HEK293 (cell line): ENCODE measurements at regions of chr19 and their contacts with region 1.

Region 1: GRCh38 chr19:19145684-19146608 is 7.7 kb upstream of the TMEM161A start:
- H3K4me3 ChIP-seq: no peak overlapping the region
- H3K27ac ChIP-seq: no peak overlapping the region
- H3K4me1 ChIP-seq: no peaks in the 10 kb centered on the region
- CTCF ChIP-seq: peak; percentile 81

Region 2: DNA sequence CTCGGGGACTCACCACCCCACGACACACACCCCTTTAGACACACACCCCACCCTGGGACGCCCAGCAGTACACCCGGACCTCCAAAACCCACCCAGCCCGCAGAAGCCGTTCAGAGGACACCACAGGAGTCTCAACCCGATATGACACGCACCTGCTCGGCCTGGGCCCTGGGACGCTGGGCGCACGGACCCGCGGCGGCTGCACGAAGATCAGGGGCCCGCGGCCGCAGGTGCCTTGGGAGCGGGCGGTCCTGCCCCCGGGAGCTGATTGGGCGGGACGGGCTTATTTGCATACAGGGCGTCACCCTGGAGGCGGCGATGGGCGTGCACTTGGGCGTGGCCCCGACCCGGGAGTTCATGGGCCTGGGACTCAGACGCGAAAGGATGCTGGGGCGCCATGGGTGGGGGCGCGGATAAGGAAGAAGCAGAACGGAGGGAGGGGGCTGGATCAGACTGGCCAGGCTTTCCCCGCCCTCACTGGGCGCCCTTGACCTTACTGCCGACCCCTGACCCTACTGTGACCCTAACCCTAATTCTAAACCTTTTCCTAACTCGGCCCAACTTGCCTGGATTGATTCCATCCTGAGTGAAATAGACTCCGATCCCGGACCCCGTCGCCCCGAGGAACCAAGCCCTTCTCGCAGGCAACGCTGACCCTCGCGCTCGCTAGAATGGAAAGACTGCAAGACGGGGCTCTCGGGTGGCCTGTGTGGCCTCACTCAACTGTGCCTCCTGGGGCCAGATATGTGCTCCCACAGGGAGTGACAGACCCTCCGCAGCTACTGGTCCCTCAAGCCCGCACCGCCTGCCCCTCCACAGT is 24.3 kb after region 1 on chr19 and contains the start of gene MEF2B:
- CTCF ChIA-PET with region 1: interaction called, 37 read pairs
- POLR2A ChIA-PET with region 1: interaction called, 7 read pairs
- H3K4me3 ChIP-seq: peak within 1 kb of the TSS; percentile 6; the same call in 1 of the 2 replicates
- H3K27ac ChIP-seq: no peak within 1 kb of the TSS
- H3K4me1 ChIP-seq: no peaks in the 10 kb centered on the region
- CTCF ChIP-seq: no peak

Region 3: GRCh38 chr19:19224852-19225494 is 79.0 kb after region 1 on chr19:
- CTCF ChIA-PET with region 1: interaction called, 11 read pairs
- POLR2A ChIA-PET with region 1: no interaction called
- H3K4me3 ChIP-seq: peak overlapping the region; percentile 19; the same call in 1 of the 2 replicates
- H3K27ac ChIP-seq: no peak overlapping the region
- H3K4me1 ChIP-seq: no peaks in the 10 kb centered on the region
- CTCF ChIP-seq: peak; percentile 82

Region 4: DNA sequence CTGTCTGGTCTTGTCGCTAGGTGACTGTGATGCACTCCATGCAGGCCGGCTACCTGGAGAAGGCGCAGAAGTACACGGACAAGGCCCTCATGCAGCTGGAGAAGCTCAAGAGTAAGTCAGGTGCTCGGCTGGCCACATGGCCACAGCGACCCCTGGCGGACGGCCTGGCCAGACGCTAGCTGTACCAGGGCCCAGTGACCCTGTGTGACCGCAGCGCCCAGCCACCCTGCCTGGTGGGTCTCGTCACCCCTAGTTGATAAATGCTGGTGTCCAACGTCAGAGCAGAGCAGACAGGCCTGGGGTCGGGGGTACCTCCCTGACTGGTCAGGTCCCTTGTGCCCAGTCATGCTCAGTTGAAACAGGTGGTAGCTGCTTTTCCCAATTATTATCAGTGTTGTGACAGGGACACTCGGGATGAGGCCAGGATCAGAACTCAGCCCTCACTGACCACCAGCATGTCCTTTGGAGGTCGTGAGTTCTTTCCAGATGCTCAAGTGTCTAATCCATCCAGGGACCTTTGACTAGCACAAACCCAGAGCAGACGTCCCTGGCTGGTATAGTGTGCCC is 196.9 kb after region 1 on chr19:
- CTCF ChIA-PET with region 1: interaction called, 10 read pairs
- POLR2A ChIA-PET with region 1: no interaction called
- H3K4me3 ChIP-seq: no peak overlapping the region
- H3K27ac ChIP-seq: no peak overlapping the region
- H3K4me1 ChIP-seq: no peaks in the 10 kb centered on the region
- CTCF ChIP-seq: peak; percentile 64